ENCODE measurements at regions of chr7 and their contacts with region 1.

Region 1: DNA sequence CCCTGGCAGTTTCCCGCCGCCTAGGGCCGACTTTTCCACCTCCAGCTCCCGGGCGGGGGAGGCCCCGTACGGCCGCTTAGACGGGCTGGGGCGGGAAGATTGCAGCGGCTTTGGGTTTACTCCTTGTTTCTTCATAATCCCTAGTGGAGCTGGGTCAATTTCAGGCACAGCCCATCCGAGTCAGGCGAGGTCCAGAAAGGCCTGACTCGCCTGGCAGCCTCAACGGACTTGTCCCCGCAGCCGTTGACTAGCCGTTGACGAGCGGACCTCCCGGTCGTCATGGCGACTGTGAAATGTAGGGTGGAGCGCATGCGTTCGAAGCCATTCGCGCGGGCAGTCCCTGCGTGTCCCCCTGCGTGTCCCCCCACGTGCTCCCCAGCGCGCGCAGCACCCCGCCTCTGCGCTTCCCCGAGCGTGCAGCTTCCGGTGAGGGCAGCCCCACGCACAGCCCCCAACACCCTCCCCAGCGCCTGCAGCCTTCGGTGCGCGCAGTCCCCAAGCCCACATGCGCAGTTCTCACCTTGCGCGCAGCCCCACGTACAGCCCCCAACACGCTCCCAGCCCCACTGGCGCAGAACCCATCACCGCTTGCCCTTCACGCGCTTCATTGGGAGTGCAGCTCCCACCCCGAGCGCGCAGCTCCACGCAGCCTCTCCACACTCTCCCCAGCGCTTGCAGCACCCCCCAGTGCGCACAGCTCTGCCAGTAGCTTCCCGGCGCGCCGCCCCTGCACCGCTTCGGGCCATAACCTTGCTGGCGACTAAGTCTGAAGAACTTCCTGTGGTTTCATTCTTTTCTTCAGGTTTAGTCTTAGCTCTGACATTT is 67.8 kb downstream of the TBX20 start:
- DNase-seq: peak; percentile 63
- H3K4me3 ChIP-seq: peak overlapping the region; percentile 48
- H3K27ac ChIP-seq: no peak overlapping the region
- H3K4me1 ChIP-seq: no peaks in the 10 kb centered on the region
- H3K27me3 ChIP-seq: peaks cover 24% of the 10 kb centered on the region
- CTCF ChIP-seq: no peak

Region 2: GRCh38 chr7:35519971-35520809 is 334.1 kb after region 1 on chr7:
- CTCF ChIA-PET with region 1: interaction called, 5 read pairs
- POLR2A ChIA-PET with region 1: no interaction called
- intact Hi-C with region 1: loop called (anchors 5 kb)
- DNase-seq: peak; percentile 87
- H3K4me3 ChIP-seq: no peak overlapping the region
- H3K27ac ChIP-seq: no peak overlapping the region
- H3K4me1 ChIP-seq: peaks cover 10% of the 10 kb centered on the region
- H3K27me3 ChIP-seq: no peaks in the 10 kb centered on the region
- CTCF ChIP-seq: peak; percentile 91

Region 3: GRCh38 chr7:35537067-35538023 is 351.2 kb after region 1 on chr7:
- CTCF ChIA-PET with region 1: no interaction called
- POLR2A ChIA-PET with region 1: no interaction called
- intact Hi-C with region 1: loop called (anchors 5 kb)
- DNase-seq: peak; percentile 85
- H3K4me3 ChIP-seq: peak overlapping the region; percentile 44
- H3K27ac ChIP-seq: no peak overlapping the region
- H3K4me1 ChIP-seq: peaks cover 4% of the 10 kb centered on the region
- H3K27me3 ChIP-seq: no peaks in the 10 kb centered on the region
- CTCF ChIP-seq: peak; percentile 98